ENCODE measurements at regions of chr18 and their contacts with region 1.

Region 1: DNA sequence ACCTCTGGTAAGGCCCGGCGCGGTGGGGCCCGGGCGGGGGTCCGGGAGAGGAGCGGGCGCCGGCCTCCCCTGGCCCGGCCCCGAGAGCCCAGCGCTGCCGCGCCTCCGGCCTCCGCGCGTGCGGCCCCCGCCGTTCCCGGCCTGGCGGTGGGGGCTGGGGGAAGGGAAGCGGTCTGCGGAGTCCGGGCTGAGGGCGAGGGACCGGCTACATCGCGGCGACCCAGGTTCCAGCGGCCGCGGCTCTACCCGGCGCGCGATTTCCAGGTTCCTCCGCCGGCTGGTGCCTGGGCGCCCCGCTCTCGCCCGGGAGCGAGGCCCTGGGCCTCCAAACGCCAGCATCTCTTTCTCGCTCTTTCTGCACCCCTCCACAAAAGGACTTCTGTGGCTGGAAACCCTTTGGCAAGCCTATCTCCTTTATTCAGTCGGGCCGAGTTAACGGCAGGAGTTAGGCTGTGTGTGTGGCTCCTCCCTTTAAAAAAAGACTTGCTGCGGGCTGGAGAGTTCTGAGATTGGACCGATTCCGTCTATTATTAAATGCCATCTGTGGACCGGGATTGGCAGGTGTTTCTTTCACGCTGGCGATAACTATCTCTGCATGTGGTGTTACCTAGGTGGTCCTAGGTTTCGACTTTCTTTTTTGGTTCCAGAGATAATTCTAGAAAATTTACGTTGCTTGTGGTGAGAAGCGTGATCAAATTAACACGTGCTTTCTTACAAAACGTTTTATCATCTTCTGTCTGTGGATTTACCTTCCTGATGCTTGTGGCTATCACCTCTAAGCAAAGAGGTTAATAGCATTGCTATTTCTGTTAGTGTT is 592 bp downstream of the ME2 start:
- DNase-seq: peak in 2 of 4 donors; percentile 39 to 42
- ATAC-seq: peak; percentile 47
- H3K4me3 ChIP-seq: peak overlapping the region; percentile 84 to 87
- H3K27ac ChIP-seq: peak overlapping the region; percentile 85 to 96 (median 94)
- H3K4me1 ChIP-seq: peaks cover 15% of the 10 kb centered on the region
- H3K27me3 ChIP-seq: no peaks in the 10 kb centered on the region
- CTCF ChIP-seq: no peak
- POLR2A ChIP-seq: no peak

Region 2: DNA sequence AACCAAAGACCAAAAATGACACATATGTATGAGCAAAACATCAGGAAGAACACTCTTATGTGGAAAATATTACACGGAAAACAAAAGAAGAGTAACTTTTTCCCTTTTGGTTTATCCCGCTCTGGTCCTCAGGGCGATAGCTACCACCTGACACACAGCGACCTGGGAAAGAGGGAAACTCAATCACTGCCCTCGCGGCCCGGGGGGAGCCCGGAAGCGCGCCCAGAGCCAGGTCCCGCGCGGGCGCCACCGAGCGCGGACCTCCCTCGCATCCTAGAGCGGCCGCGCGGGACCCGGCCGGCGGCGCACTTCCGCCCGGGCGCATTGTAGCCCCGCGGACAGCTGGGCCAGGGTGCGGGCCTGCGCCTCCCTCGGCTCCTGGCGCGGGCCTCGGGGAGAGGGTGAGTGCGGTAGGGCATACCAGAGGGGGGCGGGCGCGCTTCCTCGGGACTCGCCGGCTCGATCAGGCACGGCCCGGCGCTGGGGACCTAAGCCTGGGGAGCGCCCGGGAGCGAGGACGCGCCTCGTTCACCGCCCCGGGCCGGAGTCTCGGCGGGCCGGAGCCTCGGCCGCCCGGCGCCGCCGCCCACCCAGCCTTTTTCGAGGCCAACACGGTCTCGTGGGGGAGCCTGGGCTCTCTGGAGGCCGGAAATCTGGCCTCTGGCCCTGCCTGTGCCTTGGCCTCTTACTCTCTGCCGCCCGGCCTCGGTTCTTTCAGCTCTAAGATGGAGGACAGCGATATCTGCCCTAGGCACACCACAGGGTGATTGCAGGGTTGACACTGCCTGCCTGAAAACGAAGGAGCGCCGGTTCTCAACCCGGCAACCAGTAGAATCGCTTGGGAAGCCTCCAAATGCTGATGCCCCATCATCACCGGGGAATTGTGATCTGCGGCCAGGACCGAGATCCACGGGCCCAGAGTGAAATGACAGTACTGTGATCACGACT is 88.5 kb after region 1 on chr18 and contains the start of gene ELAC1:
- intact Hi-C with region 1: loop called (anchors 10 kb)
- DNase-seq: peak; percentile 77 to 87 (median 80)
- ATAC-seq: peak; percentile 97
- H3K4me3 ChIP-seq: peak within 1 kb of the TSS; percentile 65 to 67
- H3K27ac ChIP-seq: peak within 1 kb of the TSS; percentile 96 to 99 (median 98)
- H3K4me1 ChIP-seq: peaks cover 21% of the 10 kb centered on the region
- H3K27me3 ChIP-seq: no peaks in the 10 kb centered on the region
- CTCF ChIP-seq: peak in 1 of 7 experiments; percentile 27
- POLR2A ChIP-seq: peak; percentile 89 to 96 (median 91)
- total RNA-seq, gene ELAC1: 9.6 to 10.2 TPM